A549 (cell line): ENCODE measurements at regions of chr7 and their contacts with region 1.

Region 1: GRCh38 chr7:42940985-42941847 is 9.0 kb downstream of the MRPL32 start:
- DNase-seq: peak; percentile 69 to 70
- ATAC-seq: peak; percentile 88 to 93
- H3K4me3 ChIP-seq: no peak overlapping the region
- H3K27ac ChIP-seq: no peak overlapping the region
- H3K4me1 ChIP-seq: no peaks in the 10 kb centered on the region
- CTCF ChIP-seq: peak; percentile 94
- EP300 ChIP-seq: no peak
- POLR2A ChIP-seq: no peak
- RAD21 ChIP-seq: peak; percentile 89 to 91

Region 2: GRCh38 chr7:42953994-42954393 is 12.8 kb after region 1 on chr7:
- CTCF ChIA-PET with region 1: interaction called, 16 read pairs
- POLR2A ChIA-PET with region 1: no interaction called
- DNase-seq: no peak
- ATAC-seq: no peak
- H3K4me3 ChIP-seq: no peak overlapping the region
- H3K27ac ChIP-seq: no peak overlapping the region
- H3K4me1 ChIP-seq: no peaks in the 10 kb centered on the region
- CTCF ChIP-seq: no peak
- EP300 ChIP-seq: no peak
- POLR2A ChIP-seq: no peak
- RAD21 ChIP-seq: no peak

Region 3: DNA sequence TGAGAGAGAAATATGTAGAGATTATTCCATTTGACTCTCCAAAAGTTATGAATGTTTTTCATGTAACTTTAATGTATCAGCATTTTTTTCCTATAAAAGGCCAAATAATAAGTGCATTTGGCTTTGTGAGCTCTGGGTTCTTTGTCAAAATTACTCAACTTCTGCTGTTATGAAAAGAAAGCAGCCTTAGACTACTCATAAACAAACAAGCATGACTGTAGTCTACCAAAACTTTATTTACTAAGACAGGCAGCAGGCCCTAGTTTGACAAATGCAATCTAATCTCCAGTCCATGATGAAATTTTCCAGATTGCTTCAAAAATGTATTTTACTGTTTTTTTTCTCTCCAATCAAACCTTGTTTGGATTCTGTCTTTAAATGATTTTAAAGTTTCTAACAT is 37.3 kb after region 1 on chr7:
- CTCF ChIA-PET with region 1: interaction called, 13 read pairs
- POLR2A ChIA-PET with region 1: no interaction called
- DNase-seq: no peak
- ATAC-seq: no peak
- H3K4me3 ChIP-seq: no peak overlapping the region
- H3K27ac ChIP-seq: no peak overlapping the region
- H3K4me1 ChIP-seq: peaks cover 2% of the 10 kb centered on the region; the same call in 2 of the 3 replicates
- CTCF ChIP-seq: no peak
- EP300 ChIP-seq: no peak
- POLR2A ChIP-seq: no peak
- RAD21 ChIP-seq: no peak

Region 4: GRCh38 chr7:43248961-43249822 is 308.0 kb after region 1 on chr7:
- CTCF ChIA-PET with region 1: interaction called, 17 read pairs
- POLR2A ChIA-PET with region 1: interaction called, 3 read pairs
- DNase-seq: peak; percentile 86
- ATAC-seq: peak; percentile 96 to 97
- H3K4me3 ChIP-seq: peak overlapping the region; percentile 53
- H3K27ac ChIP-seq: peak overlapping the region; percentile 84 to 86
- H3K4me1 ChIP-seq: peaks cover 19% of the 10 kb centered on the region
- CTCF ChIP-seq: no peak
- EP300 ChIP-seq: no peak
- POLR2A ChIP-seq: peak; percentile 54; the same call in 1 of the 2 replicates
- RAD21 ChIP-seq: no peak

Region 5: GRCh38 chr7:43439631-43440401 is 498.6 kb after region 1 on chr7:
- CTCF ChIA-PET with region 1: interaction called, 40 read pairs
- POLR2A ChIA-PET with region 1: no interaction called
- DNase-seq: peak; percentile 67 to 75
- ATAC-seq: peak; percentile 89 to 97
- H3K4me3 ChIP-seq: no peak overlapping the region
- H3K27ac ChIP-seq: no peak overlapping the region
- H3K4me1 ChIP-seq: no peaks in the 10 kb centered on the region
- CTCF ChIP-seq: peak; percentile 80
- EP300 ChIP-seq: no peak
- POLR2A ChIP-seq: no peak
- RAD21 ChIP-seq: peak; percentile 71